Activated T-helper 1 cell treated with anti-CD3 and anti-CD28 coated beads, Interleukin-12 subunit alpha, Interleukin-12 subunit beta, Interleukin-2, Interleukin-4 antibody, amounts not matched to agents 30 ng/mL and 10 ng/mL and 1 ng/mL, durations not matched to agents 14 hours and 24 hours and 36 hours (primary cell): ENCODE measurements at regions of chr11 and their contacts with region 1.

Region 1: GRCh38 chr11:18526521-18527296 is at the start of gene TSG101:
- DNase-seq: peak; percentile 92
- H3K4me3 Mint-ChIP-seq: peak within 1 kb of the TSS; percentile 97
- H3K27ac Mint-ChIP-seq: peak within 1 kb of the TSS; percentile 100
- H3K4me1 Mint-ChIP-seq: peaks cover 36% of the 10 kb centered on the region
- H3K27me3 Mint-ChIP-seq: peaks cover 4% of the 10 kb centered on the region
- total RNA-seq, gene TSG101: 41.8 and 49.7 TPM in 2 replicates

Region 2: GRCh38 chr11:18145025-18145424 is 381.7 kb before region 1 on chr11:
- intact Hi-C with region 1: no loop called
- DNase-seq: no peak
- H3K4me3 Mint-ChIP-seq: no peak overlapping the region
- H3K27ac Mint-ChIP-seq: no peak overlapping the region
- H3K4me1 Mint-ChIP-seq: no peaks in the 10 kb centered on the region
- H3K27me3 Mint-ChIP-seq: peaks cover 17% of the 10 kb centered on the region

Region 3: DNA sequence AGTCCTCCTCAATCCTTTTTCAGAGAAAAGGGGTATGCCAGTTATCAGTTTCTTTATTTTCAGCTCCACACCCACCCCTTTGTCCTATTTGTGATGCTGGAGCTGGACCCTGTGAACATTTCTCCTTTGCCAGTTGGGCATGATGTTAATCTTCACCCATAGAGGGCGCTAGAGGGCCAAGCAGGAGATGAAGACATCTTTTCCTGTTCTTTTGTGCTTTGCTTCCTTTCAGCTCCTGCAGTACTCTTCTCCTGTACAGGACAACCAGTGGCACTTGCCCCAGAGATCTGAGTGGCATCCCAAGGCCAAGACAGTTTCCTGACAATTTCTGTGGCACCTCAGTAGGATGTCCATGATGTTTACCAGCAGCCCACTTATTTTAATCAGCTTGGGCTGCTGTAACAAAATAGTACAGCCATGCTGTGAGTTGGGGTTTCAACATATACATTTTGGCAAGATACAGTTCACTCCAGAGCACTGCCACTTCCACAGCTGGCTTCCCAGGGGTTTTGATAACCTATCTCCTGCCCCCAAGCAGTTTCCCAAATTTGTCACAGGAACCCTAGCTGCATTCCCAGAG is 282.8 kb before region 1 on chr11:
- intact Hi-C with region 1: loop called (anchors 2 kb)
- DNase-seq: peak; percentile 65
- H3K4me3 Mint-ChIP-seq: no peak overlapping the region
- H3K27ac Mint-ChIP-seq: peak overlapping the region; percentile 10
- H3K4me1 Mint-ChIP-seq: peaks cover 39% of the 10 kb centered on the region
- H3K27me3 Mint-ChIP-seq: peaks cover 27% of the 10 kb centered on the region

Region 4: DNA sequence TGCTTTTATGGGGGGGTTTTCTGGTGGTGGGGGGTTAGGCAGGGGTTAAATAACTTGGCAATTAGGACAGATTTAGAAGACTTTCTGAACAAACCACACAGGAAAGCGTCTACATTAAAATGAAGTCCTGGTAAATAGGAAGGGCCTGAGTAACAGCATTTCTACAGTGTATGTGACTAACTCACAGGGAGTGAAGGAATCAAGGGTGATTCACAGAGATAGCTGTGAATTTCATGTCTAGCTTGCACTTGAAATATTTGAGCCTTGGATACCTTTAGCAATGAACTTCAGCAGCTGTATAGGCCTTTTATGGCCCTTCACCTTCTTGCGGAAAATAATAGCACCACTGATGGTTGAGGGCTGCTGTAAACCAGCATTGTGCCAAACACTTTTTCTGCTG is 158.5 kb before region 1 on chr11:
- intact Hi-C with region 1: no loop called
- DNase-seq: no peak
- H3K4me3 Mint-ChIP-seq: no peak overlapping the region
- H3K27ac Mint-ChIP-seq: no peak overlapping the region
- H3K4me1 Mint-ChIP-seq: peaks cover 16% of the 10 kb centered on the region
- H3K27me3 Mint-ChIP-seq: no peaks in the 10 kb centered on the region

Region 5: GRCh38 chr11:18395735-18396504 is 130.8 kb before region 1 on chr11:
- intact Hi-C with region 1: loop called (anchors 1 kb)
- DNase-seq: peak; percentile 96
- H3K4me3 Mint-ChIP-seq: peak overlapping the region; percentile 99
- H3K27ac Mint-ChIP-seq: peak overlapping the region; percentile 98
- H3K4me1 Mint-ChIP-seq: peaks cover 67% of the 10 kb centered on the region
- H3K27me3 Mint-ChIP-seq: no peaks in the 10 kb centered on the region

Region 6: DNA sequence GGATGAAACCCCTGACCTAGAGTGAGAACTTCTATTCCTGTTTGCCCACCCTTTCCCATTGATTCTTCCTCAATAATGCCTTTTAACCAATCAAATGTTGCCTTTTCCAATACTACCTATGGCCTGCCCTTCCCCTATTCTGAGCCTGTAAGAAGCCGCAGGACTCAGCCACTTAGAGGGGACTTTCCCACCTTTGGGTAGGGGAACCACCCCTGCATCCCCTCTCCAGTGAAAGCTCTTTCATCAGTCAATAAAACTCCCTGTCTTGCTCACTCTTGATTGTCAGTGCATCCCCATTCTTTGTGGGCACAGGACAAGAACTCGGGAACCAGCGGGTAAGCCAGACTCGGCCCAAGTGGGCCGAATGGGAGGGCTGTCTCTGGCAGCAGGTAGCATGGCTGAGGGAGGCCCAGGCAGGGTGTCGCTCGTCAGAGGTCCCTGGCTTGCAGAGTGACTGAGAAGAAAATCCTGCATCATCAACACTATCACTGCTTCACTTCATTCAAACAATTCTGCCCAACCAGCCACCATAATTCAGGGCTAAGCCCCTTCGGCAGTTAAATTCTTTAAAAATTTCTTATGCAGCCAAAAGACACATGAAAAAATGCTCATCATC is 40.7 kb before region 1 on chr11:
- intact Hi-C with region 1: no loop called
- DNase-seq: no peak
- H3K4me3 Mint-ChIP-seq: no peak overlapping the region
- H3K27ac Mint-ChIP-seq: no peak overlapping the region
- H3K4me1 Mint-ChIP-seq: peaks cover 9% of the 10 kb centered on the region
- H3K27me3 Mint-ChIP-seq: no peaks in the 10 kb centered on the region

Region 7: DNA sequence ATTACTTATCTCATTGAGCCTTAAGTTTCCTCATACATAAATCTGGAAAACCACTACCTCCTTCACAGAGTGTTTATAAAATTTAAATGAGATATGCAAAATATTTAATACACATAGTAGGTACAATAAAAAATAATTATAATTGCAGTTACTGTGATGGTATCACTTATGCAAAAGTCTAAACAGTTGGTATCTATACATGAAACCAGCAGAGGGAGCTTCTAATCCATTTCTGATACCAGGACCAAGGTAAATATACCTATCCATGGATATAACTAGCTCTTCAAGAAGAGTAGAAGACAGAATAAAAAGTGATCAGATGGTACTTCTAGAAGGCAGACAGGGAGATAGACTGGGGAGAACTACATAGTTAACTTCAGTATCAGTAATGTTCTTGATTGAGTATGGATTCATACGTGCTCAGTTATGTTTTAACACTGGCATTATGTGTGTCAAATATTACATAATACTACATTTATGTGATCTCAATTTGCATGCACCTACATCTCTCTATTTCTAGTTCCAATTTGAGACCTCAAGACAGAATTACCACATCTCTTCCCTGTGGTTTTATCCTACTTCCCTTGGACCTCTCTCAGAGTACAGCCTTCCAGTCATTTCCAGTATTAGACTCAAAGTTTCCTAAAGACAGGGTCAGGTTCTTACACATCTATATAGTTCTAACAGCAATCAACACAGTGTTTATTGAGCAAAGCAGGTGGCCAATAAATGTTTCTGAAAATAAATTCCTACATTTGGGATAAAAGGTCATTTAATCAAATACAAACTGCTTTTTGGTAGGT is 13.7 kb after region 1 on chr11:
- intact Hi-C with region 1: no loop called
- DNase-seq: no peak
- H3K4me3 Mint-ChIP-seq: no peak overlapping the region
- H3K27ac Mint-ChIP-seq: no peak overlapping the region
- H3K4me1 Mint-ChIP-seq: peaks cover 8% of the 10 kb centered on the region
- H3K27me3 Mint-ChIP-seq: no peaks in the 10 kb centered on the region

Region 8: GRCh38 chr11:18615628-18616392 is 89.1 kb after region 1 on chr11:
- intact Hi-C with region 1: loop called (anchors 1 kb)
- DNase-seq: no peak
- H3K4me3 Mint-ChIP-seq: peak overlapping the region; percentile 70
- H3K27ac Mint-ChIP-seq: peak overlapping the region; percentile 87
- H3K4me1 Mint-ChIP-seq: peaks cover 67% of the 10 kb centered on the region
- H3K27me3 Mint-ChIP-seq: no peaks in the 10 kb centered on the region

Region 9: DNA sequence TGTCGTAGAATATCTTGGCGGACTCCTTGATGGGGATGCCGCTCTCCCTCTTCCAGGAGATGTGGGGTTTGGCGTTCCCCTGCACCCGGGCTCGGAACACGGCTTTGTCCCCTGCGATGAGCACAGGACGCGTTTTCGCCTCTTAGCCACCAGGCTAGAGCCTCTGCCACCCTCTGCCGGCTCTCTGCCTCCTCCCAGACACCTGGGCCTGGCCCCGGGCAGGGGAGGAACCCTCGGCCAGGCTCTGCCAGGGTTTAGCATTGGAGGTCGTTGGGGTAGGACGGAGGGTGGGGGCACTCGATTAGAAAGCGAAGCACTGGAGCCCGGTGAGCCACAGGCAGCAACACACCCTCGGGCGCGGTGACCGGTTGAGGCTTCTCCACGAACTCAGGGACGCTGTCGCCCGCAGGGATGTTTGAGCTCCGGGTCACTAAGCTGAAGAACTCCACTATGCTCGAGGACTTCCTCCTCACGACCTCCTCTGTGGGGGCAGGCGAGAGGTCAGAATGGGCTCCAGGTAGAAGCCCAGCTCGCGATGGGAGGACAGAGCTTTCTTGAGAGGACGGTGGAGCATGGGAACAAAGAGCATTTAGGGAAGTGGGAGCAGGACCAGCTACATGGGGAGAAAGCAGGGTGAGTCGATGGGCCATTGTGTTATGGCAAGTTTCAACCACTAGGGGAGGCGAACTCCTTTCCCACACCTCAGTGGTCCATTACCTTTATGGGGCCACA is 195.0 kb after region 1 on chr11:
- intact Hi-C with region 1: loop called (anchors 5 kb)
- DNase-seq: peak; percentile 38
- H3K4me3 Mint-ChIP-seq: peak overlapping the region; percentile 87
- H3K27ac Mint-ChIP-seq: no peak overlapping the region
- H3K4me1 Mint-ChIP-seq: peaks cover 21% of the 10 kb centered on the region
- H3K27me3 Mint-ChIP-seq: peaks cover 31% of the 10 kb centered on the region

Region 10: DNA sequence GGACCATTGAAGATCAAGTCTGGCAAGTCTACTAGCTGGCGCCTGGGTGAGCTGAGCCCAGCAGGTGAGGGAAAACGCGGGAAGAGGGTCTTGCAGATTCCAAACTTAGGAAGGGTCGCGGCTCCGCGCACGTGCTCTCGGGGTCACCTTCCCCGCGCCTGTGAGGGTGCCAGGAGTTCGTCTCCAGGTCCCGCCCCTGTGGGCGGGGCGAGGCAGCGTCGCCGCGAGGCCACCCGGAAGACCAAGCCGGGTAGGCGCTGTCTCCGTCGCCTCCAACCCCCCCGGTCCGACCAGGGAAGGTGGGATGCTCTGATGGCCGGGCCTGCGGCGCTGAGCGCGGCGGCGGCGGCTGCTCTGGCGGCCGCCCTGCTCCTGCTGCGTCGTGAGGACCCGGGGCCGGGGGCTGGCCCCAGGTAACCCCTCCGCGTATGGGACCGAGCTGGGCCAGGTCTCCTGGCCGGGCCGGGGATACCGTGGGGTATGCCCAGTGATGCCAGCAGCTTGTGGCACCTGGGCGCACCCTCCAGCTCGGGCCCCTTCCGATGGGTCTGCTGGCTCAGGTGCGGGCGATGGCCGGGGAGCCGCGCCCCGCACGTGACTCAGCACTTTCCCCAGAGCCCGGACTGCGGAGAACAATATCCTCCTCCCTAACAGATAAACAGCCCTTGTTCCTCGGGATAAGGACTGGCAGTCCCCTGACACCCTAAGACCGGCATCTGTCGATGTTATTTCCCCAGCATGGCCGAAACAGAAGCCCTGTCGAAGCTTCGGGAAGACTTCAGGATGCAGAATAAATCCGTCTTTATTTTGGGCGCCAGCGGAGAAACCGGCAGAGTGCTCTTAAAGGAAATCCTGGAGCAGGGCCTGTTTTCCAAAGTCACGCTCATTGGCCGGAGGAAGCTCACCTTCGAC is 1837.0 kb after region 1 on chr11 and contains the start of gene HTATIP2:
- intact Hi-C with region 1: loop called (anchors 5 kb)
- DNase-seq: peak; percentile 67
- H3K4me3 Mint-ChIP-seq: peak within 1 kb of the TSS; percentile 90
- H3K27ac Mint-ChIP-seq: peak within 1 kb of the TSS; percentile 92
- H3K4me1 Mint-ChIP-seq: peaks cover 68% of the 10 kb centered on the region
- H3K27me3 Mint-ChIP-seq: no peaks in the 10 kb centered on the region
- total RNA-seq, gene HTATIP2: 40.8 and 43.9 TPM in 2 replicates